Dendritic cell treated with granulocyte-macrophage colony-stimulating factor and Interleukin-4, amounts not matched to agents 40 ng/mL and 50 ng/mL, for 4 days (primary cell): ENCODE measurements at regions of chr15 and their contacts with region 1.

Region 1: DNA sequence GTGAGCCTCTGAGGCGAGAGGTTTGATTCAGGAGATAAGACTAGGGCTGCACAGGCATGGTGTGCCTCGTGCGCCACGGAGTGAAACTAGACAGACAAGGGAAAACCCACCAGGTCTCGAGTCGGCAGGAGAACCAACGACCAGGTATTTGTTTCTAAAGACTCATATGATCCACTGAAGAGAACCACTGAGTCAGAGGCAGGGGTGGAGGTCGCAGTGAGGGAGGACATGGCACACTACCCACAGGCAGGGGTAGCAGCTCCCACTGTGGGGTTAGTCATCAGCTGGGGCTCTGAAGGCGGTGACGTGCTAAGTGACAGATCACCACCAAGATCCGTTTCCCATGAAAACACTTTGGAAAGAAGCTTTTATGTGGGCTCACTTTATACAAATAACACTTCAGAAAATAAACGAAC is 45.7 kb downstream of the CHSY1 start:
- H3K4me3 Mint-ChIP-seq: peak overlapping the region; percentile 7
- H3K27ac Mint-ChIP-seq: peak overlapping the region; percentile 81
- H3K4me1 Mint-ChIP-seq: peaks cover 87% of the 10 kb centered on the region
- H3K27me3 Mint-ChIP-seq: no peaks in the 10 kb centered on the region

Region 2: DNA sequence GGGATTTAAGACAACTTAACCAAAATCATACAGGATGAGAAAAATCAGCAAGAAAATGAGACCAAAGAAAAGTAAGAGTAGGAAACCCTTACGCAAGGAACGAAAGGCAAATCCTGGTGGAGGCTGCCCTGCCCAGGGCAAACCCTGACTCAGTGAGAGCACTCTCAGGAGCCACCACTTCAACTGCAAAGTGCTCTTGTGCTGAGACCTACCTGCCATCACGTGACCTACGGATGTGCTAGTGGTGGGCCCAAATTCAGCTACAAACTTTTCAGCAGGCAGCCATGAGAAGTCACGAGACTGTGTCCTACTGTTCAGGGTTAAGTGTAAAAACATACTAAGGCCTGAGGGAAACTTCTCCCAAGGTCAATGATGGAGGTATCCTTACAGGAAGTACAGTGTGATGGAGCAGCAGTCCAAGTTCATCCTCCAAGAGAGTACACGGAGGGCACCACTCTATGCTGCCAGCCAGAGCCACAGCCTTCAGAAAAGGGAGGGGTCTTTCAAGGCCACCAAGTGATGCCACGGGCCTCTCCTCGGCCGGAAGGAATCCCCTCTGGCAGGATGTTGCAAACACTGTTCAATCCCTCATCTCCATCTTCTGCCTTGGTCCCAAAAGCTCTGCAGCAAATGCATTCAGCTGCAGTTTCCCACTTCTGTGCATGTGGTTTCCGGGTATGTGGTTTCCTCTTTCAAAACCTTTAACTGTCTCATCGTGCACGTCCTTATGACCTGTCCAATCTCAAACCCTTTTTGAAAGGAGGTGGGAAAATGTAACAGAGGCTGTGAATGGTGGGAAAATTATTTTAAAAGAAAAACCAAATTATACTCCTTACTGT is 36.2 kb after region 1 on chr15:
- intact Hi-C with region 1: loop called (anchors 5 kb)
- H3K4me3 Mint-ChIP-seq: no peak overlapping the region
- H3K27ac Mint-ChIP-seq: peak overlapping the region; percentile 45
- H3K4me1 Mint-ChIP-seq: peaks cover 74% of the 10 kb centered on the region
- H3K27me3 Mint-ChIP-seq: no peaks in the 10 kb centered on the region

Region 3: DNA sequence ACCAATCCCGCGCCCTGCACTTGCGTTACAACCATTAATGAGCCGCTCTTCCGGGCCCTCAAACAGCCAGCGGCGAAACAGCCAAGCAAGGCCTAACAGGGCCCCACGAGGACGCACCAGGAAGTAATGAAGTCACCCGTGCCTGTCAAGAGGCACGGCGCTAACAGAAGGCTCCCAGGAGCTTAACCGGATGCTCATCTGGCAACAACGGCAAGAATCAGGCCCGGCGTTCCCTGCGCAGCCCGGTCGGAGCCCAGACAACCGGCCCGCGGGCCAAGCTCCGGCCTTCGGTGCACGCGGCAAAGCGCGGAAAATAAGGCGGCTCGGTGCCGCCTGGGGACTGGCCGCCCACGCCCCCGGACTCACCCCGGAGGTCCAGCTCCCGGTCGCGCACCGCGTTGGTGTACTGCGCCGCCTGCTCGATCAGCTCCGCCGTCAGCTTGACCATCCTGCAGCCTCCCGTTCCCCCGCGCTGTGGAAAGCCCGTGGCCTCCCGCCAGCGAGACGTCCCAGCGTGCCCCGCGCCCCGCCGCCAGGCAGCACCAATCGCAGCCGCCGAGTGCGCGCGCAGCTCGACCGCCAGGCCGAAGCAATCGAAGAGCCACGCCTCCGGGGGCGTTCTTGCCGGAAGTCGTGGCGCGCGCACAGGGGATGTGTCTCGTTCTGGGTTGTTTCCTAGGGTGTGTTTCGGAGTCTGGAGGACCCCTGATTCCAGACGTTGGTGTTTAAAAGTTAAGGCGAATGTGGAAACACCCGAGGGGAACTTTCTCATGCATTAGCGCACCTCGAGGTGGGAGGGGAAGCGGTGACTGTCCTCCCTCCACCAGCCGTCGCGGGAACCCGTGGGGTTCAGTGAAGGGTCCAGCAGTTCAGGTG is 88.8 kb after region 1 on chr15 and contains the start of gene SNRPA1:
- intact Hi-C with region 1: no loop called
- H3K4me3 Mint-ChIP-seq: peak within 1 kb of the TSS; percentile 85
- H3K27ac Mint-ChIP-seq: peak within 1 kb of the TSS; percentile 83
- H3K4me1 Mint-ChIP-seq: peaks cover 14% of the 10 kb centered on the region
- H3K27me3 Mint-ChIP-seq: no peaks in the 10 kb centered on the region

Region 4: GRCh38 chr15:101320501-101321052 is 114.4 kb after region 1 on chr15:
- intact Hi-C with region 1: no loop called
- H3K4me3 Mint-ChIP-seq: peak overlapping the region; percentile 68
- H3K27ac Mint-ChIP-seq: peak overlapping the region; percentile 73
- H3K4me1 Mint-ChIP-seq: peaks cover 12% of the 10 kb centered on the region
- H3K27me3 Mint-ChIP-seq: peaks cover 37% of the 10 kb centered on the region